Posterior cingulate gyrus (tissue), 11 donors: ENCODE measurements at regions of chr16 and their contacts with region 1.

Region 1: GRCh38 chr16:4330277-4330874 is 14.5 kb downstream of the GLIS2 start:
- DNase-seq: peak; percentile 59 to 97 (median 84)

Region 2: DNA sequence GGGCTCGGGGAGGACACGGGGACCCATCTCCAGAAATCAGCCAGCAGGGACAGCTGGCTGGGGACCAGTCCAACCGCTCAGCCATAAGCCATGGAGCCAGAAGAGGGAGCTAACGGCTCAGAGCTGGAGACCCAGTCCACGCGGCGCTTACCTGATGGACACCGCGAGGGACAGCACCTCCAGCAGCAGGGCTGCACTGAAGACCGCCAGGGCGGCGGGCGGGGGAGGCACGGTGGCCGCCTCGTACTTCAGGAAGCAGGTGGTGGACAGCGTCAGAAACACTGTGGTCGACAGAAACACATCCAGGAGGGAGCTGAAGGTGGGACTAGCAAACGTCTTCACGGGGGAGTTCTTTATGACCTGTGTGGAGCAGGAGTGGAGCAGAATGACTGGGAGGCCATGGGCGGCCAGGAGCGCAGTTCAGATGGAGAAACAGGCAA is 347.3 kb before region 1 on chr16:
- intact Hi-C with region 1: loop called (anchors 10 kb)
- DNase-seq: peak; percentile 40 to 95 (median 74)

Region 3: DNA sequence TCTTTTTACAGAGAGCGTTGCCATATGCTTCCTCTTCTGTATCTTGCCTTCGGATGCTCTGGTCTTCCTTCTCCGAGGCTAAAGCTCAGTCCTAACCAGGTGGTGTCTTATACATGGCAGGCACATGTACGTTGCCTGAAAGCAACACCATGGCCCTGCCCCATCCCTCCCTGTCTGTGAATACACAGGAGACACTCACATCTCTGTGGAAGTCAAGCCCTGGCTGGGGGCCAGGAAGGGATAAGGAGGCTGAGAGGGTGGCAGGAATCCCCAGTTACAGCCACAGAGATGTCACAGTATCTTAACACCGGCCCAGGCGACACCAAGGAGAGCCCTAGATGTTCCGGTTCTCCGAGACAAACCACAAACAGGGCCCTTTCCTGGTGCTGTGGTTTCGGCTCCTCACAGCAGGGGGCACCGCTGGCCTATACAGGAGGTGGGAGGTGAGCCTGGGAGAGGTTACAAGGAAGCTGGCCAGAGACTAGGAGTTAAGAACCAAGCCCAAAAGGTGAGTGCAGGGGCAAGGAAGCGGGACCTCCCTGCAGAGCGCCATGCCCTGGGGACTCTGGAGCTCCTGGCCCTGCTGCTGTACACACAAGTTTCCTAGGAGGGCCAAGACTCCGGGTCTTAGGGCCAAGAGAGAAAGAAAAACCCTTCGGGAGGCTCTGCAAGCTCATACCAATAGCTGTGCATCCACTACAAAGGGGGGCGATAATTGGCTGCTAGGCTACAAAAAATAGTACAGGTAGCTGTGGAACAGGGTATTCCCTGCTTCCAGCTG is 130.2 kb before region 1 on chr16:
- intact Hi-C with region 1: loop called (anchors 5 kb)
- DNase-seq: peak in 8 of 10 donors; percentile 18 to 91 (median 48)

Region 4: DNA sequence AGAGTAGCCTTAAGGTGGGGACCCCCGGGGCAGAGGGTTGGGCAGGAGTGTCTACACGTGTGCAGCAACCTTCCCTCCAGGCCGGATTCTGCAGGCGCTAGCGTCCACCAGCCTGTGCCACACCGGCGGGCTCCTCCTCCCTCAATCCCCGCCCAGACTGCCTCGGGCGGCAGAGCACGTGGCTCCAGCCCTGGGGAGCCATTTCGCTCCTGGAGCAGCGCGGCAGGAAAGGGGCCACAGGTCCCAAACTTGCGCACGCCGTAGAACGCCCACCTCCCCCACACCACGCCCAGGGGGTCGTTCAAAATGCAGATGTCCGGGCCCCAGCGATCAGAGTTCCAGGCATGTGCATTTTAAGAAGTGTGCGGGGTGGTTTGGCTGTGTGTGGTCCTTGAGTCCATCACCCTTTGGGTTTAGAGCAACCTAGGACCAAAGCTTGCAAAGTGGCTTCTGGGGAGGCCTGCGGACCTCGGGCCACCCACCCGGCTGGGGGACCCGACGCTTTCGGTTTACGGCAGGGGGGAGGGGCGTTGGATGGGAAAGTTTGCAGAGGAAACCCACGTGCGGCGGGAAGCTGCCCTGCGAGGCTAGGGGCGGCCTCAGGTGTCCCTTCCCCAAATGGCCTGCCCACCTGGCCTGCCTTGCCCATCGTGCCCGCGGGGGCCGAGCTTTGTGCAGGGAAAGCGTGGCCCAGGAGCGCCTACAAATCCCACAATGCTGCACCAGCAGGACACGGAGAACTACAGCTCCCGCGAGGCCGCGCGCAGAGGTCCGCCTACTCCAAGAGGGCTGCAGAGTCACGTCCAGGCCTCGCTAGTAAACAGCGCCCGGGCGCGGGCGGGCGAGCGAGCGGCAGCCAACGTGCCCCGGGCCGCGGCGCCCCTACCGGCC is 59.0 kb before region 1 on chr16:
- intact Hi-C with region 1: loop called (anchors 5 kb)
- DNase-seq: peak; percentile 90 to 99 (median 96)

Region 5: GRCh38 chr16:4288148-4288921 is 42.0 kb before region 1 on chr16:
- intact Hi-C with region 1: loop called (anchors 1 kb)
- DNase-seq: peak; percentile 40 to 95 (median 78)

Region 6: DNA sequence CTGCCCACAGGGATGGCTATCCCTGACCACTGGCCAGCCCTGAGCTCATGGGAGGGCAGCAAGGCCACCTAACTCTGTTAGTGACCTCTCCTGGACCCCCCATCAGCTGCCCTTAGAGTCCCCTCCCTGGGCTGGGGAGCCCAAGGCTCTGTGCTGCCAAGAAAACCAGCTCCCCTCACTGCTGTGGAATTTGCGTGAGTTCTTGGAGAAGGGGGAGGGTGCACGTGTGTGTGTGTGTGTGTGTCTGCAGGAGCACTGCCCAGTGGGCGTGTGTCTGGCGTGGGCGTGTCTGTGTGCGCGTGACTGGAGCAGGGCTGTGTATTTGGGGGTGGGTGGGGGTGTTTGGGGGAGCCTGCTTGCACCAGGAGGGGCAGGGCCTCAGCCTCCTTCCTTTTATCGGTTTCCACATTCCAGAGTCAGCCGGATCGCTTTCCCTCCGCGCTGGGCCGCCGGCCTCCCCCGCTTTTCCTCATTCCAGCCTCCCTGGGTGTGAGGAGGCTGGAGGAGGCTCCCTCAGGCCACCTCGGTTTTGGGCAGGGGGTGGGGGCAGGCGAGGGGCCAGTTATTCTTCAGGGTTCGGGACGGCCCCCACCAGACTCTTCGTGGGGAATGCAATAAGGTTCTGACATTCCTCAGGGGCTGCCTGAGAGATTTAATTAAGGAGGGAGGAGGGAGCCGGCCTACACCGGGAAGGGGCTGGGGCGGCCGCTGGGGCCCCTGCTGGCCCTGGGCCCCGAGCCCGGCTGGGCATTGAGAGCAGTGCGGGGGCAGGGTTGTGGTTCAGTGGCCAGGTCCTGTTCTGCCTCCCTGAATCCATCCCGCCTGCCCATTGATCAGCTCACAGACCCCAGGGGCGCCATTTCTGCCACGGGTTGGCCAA is 43.7 kb after region 1 on chr16:
- intact Hi-C with region 1: no loop called
- DNase-seq: peak in 6 of 10 donors; percentile 28 to 90 (median 50)

Region 7: DNA sequence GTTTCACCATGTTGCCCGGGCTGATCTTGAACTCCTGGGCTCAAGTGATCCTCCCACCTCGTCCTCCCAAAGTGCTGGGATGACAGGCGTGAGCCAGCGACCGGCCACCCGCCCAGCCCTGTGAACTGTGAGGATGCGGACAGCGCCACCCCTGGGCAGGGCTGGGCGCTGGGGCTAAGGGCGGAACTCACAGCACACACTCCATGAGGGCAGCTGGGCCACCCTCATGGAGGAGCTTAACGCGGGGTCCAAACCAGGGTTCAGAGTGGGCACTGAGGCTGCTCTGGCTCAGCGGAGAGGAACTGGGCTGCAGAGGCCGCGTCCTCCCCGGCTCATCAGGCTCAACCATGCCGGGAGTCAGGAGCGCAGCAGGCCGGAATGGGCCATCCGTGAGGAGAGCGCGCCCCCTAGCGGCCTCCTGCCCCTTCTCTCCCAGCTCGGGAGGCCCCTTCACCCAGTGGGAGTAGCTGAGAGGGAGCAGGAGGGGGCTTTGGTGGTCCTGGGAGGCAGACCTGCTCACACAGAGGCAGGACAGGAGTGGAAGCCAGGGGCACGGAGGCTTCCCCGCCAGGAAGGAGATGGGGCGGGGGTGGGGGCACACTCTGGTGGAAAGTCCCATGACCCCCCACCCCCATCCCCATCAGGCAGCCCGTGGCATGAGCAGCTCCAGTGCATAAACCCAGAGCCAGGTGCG is 72.2 kb after region 1 on chr16:
- intact Hi-C with region 1: no loop called
- DNase-seq: peak; percentile 76 to 98 (median 89)